Naive thymus-derived CD4-positive, alpha-beta T cell (primary cell): ENCODE measurements at regions of chr15 and their contacts with region 1.

Region 1: GRCh38 chr15:38690689-38691332 is 126.2 kb upstream of the RASGRP1 start:
- DNase-seq: peak; percentile 60 to 87 (median 80)
- ATAC-seq: peak; percentile 68
- H3K4me3 ChIP-seq: no peak overlapping the region
- H3K4me3 Mint-ChIP-seq: peak overlapping the region in 7 of 10 donors; percentile 46 to 73 (median 69)
- H3K27ac ChIP-seq: peak overlapping the region; percentile 44
- H3K27ac Mint-ChIP-seq: peak overlapping the region; percentile 18 to 99 (median 95)
- H3K4me1 ChIP-seq: peaks cover 53 to 63% of the 10 kb centered on the region in 2 donors
- H3K4me1 Mint-ChIP-seq: peaks cover 49 to 87% (median 67%) of the 10 kb centered on the region in 7 donors
- H3K27me3 ChIP-seq: no peaks in the 10 kb centered on the region
- H3K27me3 Mint-ChIP-seq: no peaks in the 10 kb centered on the region

Region 2: DNA sequence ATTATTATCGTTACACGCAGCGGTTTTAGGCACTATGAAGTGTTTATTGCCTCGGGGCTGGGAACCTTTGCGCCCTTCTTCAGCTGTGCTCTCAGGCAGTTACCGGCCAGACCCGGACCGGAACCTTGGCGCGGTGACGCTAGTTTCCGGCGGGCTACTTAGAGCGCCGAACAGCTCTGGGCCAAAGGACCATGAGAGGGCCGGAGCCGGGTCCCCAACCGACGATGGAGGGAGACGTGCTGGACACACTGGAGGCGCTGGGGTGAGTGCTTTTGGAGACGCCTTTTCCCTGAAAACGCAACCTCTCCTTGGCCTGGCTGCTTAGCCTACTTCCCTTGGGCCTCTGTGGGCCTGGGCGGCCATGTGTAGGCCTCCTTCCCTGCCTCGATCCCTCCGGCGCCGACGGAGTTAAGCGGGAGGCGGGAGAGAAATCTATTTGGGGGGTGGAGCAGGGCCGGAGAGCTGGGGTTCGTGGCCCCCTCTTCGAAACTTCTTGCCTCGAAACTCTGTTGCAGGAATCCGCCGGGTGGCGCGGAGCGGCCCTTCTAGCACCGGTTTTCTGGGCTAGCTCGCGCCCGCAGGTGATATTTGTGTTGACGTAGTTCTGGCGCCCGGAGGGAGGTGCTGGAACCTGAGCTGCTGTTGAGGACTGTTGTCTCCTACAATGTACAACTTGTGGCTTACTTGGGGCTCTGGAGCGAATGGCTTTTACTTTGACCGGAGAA is 236.7 kb before region 1 on chr15 and contains the start of gene FAM98B:
- CTCF ChIA-PET with region 1: interaction called, 16 read pairs
- POLR2A ChIA-PET with region 1: interaction called, 23 read pairs
- intact Hi-C with region 1: no loop called
- DNase-seq: peak; percentile 73 to 94 (median 82)
- ATAC-seq: peak; percentile 92
- H3K4me3 ChIP-seq: peak within 1 kb of the TSS; percentile 98
- H3K4me3 Mint-ChIP-seq: peak within 1 kb of the TSS; percentile 86 to 99 (median 96)
- H3K27ac ChIP-seq: peak within 1 kb of the TSS; percentile 95
- H3K27ac Mint-ChIP-seq: peak within 1 kb of the TSS; percentile 92 to 99 (median 95)
- H3K4me1 ChIP-seq: peaks cover 13 to 22% of the 10 kb centered on the region in 2 donors
- H3K4me1 Mint-ChIP-seq: peaks cover 24 to 46% (median 36%) of the 10 kb centered on the region in 7 donors
- H3K27me3 ChIP-seq: no peaks in the 10 kb centered on the region
- H3K27me3 Mint-ChIP-seq: peaks cover 0 to 19% (median 0%) of the 10 kb centered on the region in 5 donors
- total RNA-seq, gene FAM98B: 16.2 to 39.5 (median 27.6) TPM

Region 3: DNA sequence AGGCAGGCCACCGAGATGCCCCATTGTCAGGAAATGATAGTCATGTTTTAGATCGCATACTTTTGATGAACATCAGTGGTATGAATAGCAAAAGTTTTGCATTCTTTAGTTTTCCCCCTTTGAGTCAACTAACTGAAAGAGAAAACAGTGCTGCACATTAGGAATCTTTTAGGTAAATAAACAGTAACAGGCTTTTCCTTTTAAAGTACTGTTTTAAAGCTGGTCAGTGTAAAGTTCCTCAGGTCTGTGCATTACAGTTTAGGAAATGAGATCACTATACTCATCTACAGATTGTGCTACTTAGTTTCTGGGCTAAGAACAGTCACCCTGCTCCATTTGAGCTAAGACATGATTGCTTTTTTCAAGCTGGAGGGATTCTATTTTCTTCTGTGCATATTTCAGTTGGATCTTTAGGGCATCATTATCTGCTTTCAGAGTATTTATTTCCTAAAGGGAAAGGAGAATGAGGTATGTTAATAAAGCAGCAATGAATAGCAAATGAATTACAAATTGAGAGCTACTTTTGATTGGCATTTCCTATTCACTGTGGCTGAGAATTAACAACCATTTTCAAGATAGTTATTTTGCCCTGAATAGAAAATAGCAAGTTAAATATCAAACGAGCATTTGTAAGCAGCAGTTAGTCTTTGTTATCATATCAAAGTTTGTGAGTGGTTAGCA is 200.4 kb before region 1 on chr15:
- CTCF ChIA-PET with region 1: interaction called, 13 read pairs
- POLR2A ChIA-PET with region 1: interaction called, 5 read pairs
- intact Hi-C with region 1: loop called in 1 of 2 experiments (anchors 2 kb)
- DNase-seq: no peak
- ATAC-seq: no peak
- H3K4me3 ChIP-seq: no peak overlapping the region
- H3K4me3 Mint-ChIP-seq: no peak overlapping the region
- H3K27ac ChIP-seq: peak overlapping the region; percentile 14
- H3K27ac Mint-ChIP-seq: peak overlapping the region in 8 of 9 donors; percentile 18 to 93 (median 67)
- H3K4me1 ChIP-seq: peaks cover 0 to 13% of the 10 kb centered on the region in 2 donors
- H3K4me1 Mint-ChIP-seq: peaks cover 7 to 48% (median 42%) of the 10 kb centered on the region in 7 donors
- H3K27me3 ChIP-seq: no peaks in the 10 kb centered on the region
- H3K27me3 Mint-ChIP-seq: no peaks in the 10 kb centered on the region

Region 4: DNA sequence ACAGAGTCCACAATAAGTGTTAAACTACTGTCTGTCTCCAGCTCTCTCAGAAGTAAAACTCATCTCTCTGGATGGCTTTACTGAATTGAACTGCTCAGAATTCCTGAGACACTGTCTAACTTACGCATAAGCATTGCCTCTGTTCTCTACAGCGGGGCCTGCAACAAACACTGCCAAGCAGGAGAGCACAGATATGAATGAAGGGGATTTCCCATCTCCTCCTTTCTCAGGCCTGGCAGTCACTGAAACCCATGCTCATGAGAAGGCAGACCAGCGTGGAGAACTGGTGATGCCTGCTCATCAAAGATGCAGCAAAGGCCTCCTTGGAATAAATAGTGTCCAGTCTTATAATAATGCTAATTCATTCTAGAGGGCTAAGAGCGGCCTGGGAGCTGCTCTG is 136.5 kb before region 1 on chr15:
- CTCF ChIA-PET with region 1: interaction called, 295 read pairs
- POLR2A ChIA-PET with region 1: interaction called, 260 read pairs
- intact Hi-C with region 1: no loop called
- DNase-seq: peak in 2 of 9 donors; percentile 30 to 41
- ATAC-seq: peak; percentile 60
- H3K4me3 ChIP-seq: peak overlapping the region; percentile 19
- H3K4me3 Mint-ChIP-seq: peak overlapping the region; percentile 19 to 97 (median 72)
- H3K27ac ChIP-seq: peak overlapping the region; percentile 91
- H3K27ac Mint-ChIP-seq: peak overlapping the region; percentile 73 to 98 (median 89)
- H3K4me1 ChIP-seq: peaks cover 84 to 89% of the 10 kb centered on the region in 2 donors
- H3K4me1 Mint-ChIP-seq: peaks cover 62 to 95% (median 93%) of the 10 kb centered on the region in 7 donors
- H3K27me3 ChIP-seq: no peaks in the 10 kb centered on the region
- H3K27me3 Mint-ChIP-seq: no peaks in the 10 kb centered on the region

Region 5: DNA sequence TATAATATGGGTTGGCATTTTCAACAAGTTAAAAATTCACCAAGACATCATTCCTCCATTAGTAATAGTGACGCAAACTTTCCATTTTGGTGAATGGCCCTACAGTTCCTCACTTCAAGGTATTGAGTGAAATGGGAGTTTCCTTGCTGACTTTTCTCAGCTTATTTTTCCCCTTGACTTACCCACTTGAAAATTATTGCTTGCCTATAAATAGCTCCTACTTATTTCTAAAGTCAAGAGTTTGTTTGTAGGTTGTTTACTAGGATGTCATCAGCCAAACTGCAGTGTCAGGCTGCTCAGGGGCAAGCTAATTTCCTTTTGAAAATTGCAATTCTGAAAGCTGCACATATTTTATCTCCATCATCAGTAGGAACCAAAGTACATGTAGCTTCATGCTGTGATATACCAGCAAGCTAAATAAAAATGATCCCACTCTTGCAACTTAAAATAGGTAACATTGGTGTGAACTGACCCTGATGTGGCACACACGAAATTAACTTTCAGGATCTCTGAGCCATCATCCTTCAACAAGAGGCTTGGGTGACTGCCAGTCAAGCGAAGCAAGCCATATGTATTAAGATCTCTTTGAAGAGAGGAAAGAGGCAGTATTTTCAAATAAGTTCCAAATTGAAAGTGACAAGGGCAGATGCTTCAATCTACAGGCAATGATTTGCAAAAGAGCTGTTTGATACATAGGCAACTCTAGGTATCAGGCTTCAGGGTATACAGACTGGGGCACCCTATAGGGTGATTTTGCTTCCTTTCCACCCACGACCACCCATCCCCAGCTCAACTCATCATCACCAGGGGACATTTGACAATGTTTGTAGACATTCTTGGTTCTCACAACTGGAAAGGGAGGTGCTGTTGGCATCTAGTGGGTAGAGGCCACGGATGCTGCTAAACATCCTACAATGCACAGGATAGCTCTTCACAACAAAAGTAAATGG is 59.4 kb before region 1 on chr15:
- CTCF ChIA-PET with region 1: interaction called, 11 read pairs
- POLR2A ChIA-PET with region 1: interaction called, 4 read pairs
- intact Hi-C with region 1: loop called in 1 of 2 experiments (anchors 10 kb)
- DNase-seq: peak in 3 of 9 donors; percentile 18 to 29 (median 28)
- ATAC-seq: no peak
- H3K4me3 ChIP-seq: peak overlapping the region; percentile 9
- H3K4me3 Mint-ChIP-seq: peak overlapping the region in 9 of 10 donors; percentile 12 to 67 (median 32)
- H3K27ac ChIP-seq: peak overlapping the region; percentile 22
- H3K27ac Mint-ChIP-seq: peak overlapping the region; percentile 60 to 92 (median 77)
- H3K4me1 ChIP-seq: peaks cover 3 to 20% of the 10 kb centered on the region in 2 donors
- H3K4me1 Mint-ChIP-seq: peaks cover 20 to 45% (median 41%) of the 10 kb centered on the region in 7 donors
- H3K27me3 ChIP-seq: no peaks in the 10 kb centered on the region
- H3K27me3 Mint-ChIP-seq: no peaks in the 10 kb centered on the region

Region 6: GRCh38 chr15:38665586-38666305 is 25.1 kb before region 1 on chr15:
- CTCF ChIA-PET with region 1: interaction called, 139 read pairs
- POLR2A ChIA-PET with region 1: interaction called, 91 read pairs
- intact Hi-C with region 1: no loop called
- DNase-seq: peak in 6 of 9 donors; percentile 46 to 54 (median 50)
- ATAC-seq: peak; percentile 55
- H3K4me3 ChIP-seq: no peak overlapping the region
- H3K4me3 Mint-ChIP-seq: peak overlapping the region in 8 of 10 donors; percentile 4 to 71 (median 47)
- H3K27ac ChIP-seq: peak overlapping the region; percentile 58
- H3K27ac Mint-ChIP-seq: peak overlapping the region; percentile 39 to 100 (median 93)
- H3K4me1 ChIP-seq: peaks cover 44 to 79% of the 10 kb centered on the region in 2 donors
- H3K4me1 Mint-ChIP-seq: peaks cover 52 to 94% (median 89%) of the 10 kb centered on the region in 7 donors
- H3K27me3 ChIP-seq: no peaks in the 10 kb centered on the region
- H3K27me3 Mint-ChIP-seq: no peaks in the 10 kb centered on the region

Region 7: GRCh38 chr15:38868326-38869114 is 177.7 kb after region 1 on chr15:
- CTCF ChIA-PET with region 1: interaction called, 10 read pairs
- POLR2A ChIA-PET with region 1: no interaction called
- intact Hi-C with region 1: no loop called
- DNase-seq: no peak
- ATAC-seq: no peak
- H3K4me3 ChIP-seq: no peak overlapping the region
- H3K4me3 Mint-ChIP-seq: no peak overlapping the region
- H3K27ac ChIP-seq: no peak overlapping the region
- H3K27ac Mint-ChIP-seq: no peak overlapping the region
- H3K4me1 ChIP-seq: no peaks in the 10 kb centered on the region
- H3K4me1 Mint-ChIP-seq: peaks cover 0 to 3% (median 0%) of the 10 kb centered on the region in 7 donors
- H3K27me3 ChIP-seq: peaks cover 0 to 5% of the 10 kb centered on the region in 2 donors
- H3K27me3 Mint-ChIP-seq: peaks cover 8 to 44% (median 33%) of the 10 kb centered on the region in 5 donors

Region 8: DNA sequence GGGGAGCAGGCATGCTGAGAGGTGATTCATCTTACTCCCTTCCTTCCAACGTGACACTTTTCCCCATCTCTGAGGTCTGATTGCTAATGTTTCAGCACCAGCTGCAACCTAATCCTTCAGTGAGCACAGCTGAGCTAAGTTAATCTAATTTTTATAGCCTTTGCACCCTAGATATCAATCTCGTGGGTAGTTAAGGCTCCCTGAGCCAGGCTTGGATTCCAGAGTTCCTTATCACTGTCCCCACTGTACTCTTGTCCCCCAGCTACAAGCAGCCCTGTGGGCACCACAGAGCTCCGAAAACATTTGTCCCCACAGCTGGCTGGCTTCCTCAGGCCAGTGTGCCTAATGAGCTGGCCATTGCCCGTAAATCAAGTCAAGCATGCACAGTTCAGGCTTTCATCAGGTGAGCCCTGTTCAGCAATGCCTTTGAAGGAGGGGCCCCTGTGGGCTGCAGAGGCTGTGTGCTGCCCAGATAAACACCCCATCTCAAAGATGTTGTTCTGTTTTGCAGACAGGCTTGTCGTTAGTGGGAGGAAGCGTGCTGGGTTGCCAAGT is 250.7 kb after region 1 on chr15:
- CTCF ChIA-PET with region 1: no interaction called
- POLR2A ChIA-PET with region 1: no interaction called
- intact Hi-C with region 1: no loop called
- DNase-seq: no peak
- ATAC-seq: no peak
- H3K4me3 ChIP-seq: no peak overlapping the region
- H3K4me3 Mint-ChIP-seq: no peak overlapping the region
- H3K27ac ChIP-seq: no peak overlapping the region
- H3K27ac Mint-ChIP-seq: no peak overlapping the region
- H3K4me1 ChIP-seq: no peaks in the 10 kb centered on the region
- H3K4me1 Mint-ChIP-seq: no peaks in the 10 kb centered on the region
- H3K27me3 ChIP-seq: no peaks in the 10 kb centered on the region
- H3K27me3 Mint-ChIP-seq: peaks cover 10 to 28% (median 20%) of the 10 kb centered on the region in 5 donors

Region 9: GRCh38 chr15:39391230-39391629 is 700.4 kb after region 1 on chr15:
- CTCF ChIA-PET with region 1: no interaction called
- POLR2A ChIA-PET with region 1: no interaction called
- intact Hi-C with region 1: no loop called
- DNase-seq: no peak
- ATAC-seq: peak; percentile 22
- H3K4me3 ChIP-seq: no peak overlapping the region
- H3K4me3 Mint-ChIP-seq: no peak overlapping the region
- H3K27ac ChIP-seq: no peak overlapping the region
- H3K27ac Mint-ChIP-seq: no peak overlapping the region
- H3K4me1 ChIP-seq: no peaks in the 10 kb centered on the region
- H3K4me1 Mint-ChIP-seq: peaks cover 0 to 2% (median 0%) of the 10 kb centered on the region in 7 donors
- H3K27me3 ChIP-seq: no peaks in the 10 kb centered on the region
- H3K27me3 Mint-ChIP-seq: peaks cover 9 to 15% (median 13%) of the 10 kb centered on the region in 5 donors